Left ventricle myocardium superior (tissue), 1 donor: ENCODE measurements at regions of chr18 and their contacts with region 1.

Region 1: DNA sequence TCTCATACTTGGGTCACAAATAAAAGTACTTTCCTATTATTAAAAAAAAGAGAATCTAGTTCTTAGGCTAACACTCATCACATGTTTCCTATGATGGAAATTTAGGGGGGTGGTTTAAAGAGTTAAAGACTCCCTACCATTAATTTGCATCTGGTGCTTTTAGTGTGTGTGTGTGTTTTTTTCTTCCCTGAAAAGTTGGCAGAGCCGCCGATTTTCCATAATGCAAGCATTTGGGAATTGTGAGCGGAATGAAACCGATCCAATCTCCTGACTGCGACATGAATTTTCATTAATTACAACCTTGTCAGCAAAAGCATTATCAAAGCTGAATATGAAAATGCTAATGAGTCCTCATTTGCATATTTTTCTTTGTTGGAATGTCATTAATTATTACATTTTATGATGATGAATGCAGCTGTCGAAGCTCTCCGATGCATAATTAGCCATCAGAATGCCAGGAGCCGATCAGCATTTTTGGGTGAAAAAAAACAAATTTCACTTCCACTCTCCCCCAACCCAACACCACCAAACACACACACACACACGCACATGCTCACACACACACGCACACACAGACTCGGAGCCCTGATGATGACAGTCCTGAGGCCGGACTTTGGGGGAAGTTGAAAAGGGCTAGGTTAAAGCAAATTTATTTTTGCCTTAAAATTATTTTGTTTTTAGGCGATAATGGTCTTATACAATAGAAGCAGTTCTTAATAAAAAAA is 165.4 kb downstream of the TCF4 start:
- DNase-seq: peak; percentile 41
- ATAC-seq: peak; percentile 61

Region 2: GRCh38 chr18:55370936-55371335 is 51.7 kb before region 1 on chr18:
- intact Hi-C with region 1: no loop called
- DNase-seq: no peak
- ATAC-seq: no peak

Region 3: DNA sequence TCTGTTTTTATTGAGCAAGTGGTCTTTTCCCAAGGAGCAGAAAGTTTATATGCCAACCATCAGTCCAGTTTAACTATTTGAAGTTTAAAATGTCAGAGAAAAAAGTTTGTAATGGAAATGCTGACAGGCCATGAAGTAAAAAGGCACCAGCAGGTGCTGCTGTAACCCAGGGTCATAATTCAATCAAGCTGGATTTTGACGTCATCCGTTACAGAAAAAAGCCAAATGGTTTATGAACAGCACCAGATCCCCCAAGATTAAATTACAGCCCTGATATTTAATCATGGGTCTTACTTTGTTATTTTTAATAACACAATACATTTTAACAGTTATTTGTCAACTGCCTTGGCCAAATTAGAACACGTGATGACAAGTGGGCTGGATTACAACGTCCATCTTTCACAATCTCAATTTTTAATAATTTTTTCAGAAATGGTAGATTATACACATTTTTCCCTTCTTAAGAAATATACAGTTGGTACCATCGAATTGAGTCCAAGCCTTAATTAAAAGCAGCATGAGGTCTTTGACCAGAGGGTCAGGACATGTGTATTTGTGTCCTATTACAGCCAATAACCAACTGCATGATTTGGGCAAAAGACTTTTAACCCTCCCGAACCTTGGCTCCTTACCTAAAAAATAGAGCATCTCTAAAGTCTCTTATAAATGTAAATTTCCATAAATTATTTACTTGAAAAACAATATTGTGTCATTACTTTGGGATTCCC is 155.4 kb after region 1 on chr18:
- intact Hi-C with region 1: no loop called
- DNase-seq: no peak
- ATAC-seq: no peak

Region 4: DNA sequence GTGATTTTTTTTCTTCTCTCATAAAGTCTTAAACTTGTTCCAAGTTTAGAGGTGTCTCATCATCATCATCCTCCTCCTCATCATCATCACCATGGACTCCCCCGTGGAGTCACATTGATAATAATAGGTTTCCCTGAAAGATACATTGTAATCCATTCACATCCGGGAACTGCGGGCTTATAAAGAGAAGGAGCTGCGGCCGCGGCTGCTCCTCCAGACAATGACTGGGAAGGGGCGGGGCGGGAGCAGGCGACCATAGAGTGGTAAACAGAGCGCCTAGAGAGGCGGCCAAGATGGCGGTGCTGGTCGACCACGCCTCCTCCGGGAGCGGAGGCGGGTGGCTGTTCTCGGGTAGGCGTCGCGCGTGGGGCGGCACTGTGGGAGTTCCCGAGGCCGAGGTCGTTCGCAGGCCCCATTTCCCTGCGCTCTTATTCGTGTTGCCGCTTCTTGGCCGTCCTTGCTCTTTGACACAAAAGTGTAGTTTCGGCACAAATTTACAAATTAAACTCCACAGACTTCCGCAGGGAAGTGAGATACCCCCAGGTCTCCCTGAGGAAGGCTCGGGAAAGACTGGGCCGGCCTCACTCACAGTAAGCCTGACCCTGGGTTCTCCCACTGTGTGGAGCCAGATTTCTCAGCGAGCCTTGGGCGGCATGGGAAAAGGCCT is 167.1 kb after region 1 on chr18:
- intact Hi-C with region 1: loop called (anchors 5 kb)
- DNase-seq: peak; percentile 97
- ATAC-seq: peak; percentile 98